ENCODE measurements at regions of chr13 and their contacts with region 1.

Region 1: GRCh38 chr13:79538757-79539156 is 57.8 kb downstream of the NDFIP2 start:
- DNase-seq: no peak
- H3K4me3 ChIP-seq: no peak overlapping the region
- CTCF ChIP-seq: no peak
- POLR2A ChIP-seq: no peak

Region 2: GRCh38 chr13:79360095-79360494 is 178.7 kb before region 1 on chr13:
- intact Hi-C with region 1: no loop called
- DNase-seq: no peak
- H3K4me3 ChIP-seq: no peak overlapping the region
- CTCF ChIP-seq: no peak
- POLR2A ChIP-seq: no peak

Region 3: GRCh38 chr13:79427265-79427664 is 111.5 kb before region 1 on chr13:
- intact Hi-C with region 1: loop called (anchors 5 kb)
- DNase-seq: no peak
- H3K4me3 ChIP-seq: no peak overlapping the region
- CTCF ChIP-seq: no peak
- POLR2A ChIP-seq: no peak